ENCODE measurements at regions of chr19 and their contacts with region 1.

Region 1: DNA sequence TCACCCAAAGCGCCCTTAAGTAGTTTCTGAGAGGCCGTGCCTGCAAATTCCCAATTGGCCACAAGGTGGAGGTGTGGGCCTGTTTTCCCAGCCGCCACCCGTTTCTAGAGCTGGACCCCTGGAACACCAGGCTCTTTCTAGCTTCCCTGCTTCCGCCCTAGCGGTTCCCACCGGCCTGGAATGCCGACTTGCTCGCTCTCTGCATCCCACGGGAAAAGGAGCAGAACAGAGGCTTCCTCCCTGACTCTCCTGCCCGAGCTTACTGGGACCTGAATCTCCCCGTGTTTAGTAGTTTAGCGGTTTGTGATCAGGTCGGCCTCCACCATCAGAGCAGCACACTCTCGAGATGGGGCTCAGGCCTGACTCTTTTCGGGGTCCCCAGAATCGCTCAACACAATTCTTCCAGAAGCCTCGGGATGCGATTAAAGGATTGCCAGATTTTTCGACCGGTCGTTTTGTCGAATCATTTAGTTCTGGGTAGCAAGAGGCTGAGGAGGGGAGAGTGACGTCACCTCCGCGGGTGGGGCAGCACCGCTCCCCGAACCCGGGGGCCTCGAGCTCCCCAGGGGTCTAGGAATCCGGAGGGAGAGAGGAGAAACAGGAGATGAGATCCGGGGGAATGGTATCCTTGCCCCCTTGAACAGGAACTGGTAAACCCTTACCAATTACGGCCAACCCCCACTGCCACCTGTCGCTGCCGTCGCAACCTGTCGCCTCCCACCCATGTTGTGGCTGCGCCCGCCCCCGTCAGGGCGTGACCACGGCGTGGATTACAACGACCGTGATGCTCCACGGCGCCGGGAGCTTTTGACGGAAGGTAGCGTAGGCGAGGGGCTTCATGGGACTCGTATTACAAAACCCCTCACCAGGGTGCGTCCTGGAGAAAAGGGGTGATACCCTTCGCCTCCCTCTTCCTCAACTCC is 8.0 kb downstream of the NAPSA start:
- DNase-seq: peak; percentile 80 to 82
- H3K4me3 ChIP-seq: peak overlapping the region in 2 of 3 donors; percentile 25 to 31
- H3K27ac ChIP-seq: peak overlapping the region; percentile 65 to 83 (median 81)
- H3K4me1 ChIP-seq: peaks cover 4 to 26% of the 10 kb centered on the region in 2 donors
- H3K27me3 ChIP-seq: no peaks in the 10 kb centered on the region
- CTCF ChIP-seq: peak; percentile 77 to 91 (median 86)
- POLR2A ChIP-seq: peak in 1 of 2 donors; percentile 47

Region 2: DNA sequence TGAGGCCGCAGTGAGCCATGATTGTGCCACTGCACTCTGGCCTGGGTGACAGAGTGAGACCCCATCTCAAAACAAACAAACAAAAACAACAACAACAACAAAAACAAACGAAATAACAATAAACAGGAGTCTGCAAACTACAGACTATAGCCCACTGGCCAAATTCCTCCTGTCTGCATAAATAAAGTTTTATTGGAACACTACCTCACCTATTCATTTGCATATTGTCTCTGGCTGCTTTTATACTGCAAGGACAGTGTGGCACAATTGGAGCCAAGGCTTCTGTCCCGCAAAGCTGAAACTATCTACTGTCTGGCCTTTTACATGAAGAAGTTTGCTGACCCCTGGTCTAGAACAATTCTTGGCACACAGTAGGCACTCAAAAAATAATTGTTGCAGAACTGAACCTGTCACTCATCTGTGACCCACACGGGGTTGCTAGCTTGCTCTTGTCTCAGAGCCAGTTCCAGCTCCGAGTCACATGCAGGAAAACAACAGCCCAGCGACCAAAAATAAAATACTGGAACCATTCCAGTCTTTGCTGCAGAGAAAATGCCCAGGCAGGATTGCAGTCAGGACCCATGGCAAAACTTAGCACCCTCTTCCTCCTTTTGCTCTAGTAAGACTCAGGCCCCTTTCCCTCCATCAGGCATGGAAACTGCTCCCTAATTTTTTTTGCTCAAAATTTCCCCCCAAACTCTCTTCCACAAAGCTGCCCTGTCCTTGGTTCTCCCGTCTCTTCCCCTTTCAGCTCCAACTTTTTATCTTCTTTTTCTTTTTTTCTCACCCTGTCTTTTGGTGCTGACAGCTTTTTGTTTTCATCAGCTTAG is 158.8 kb before region 1 on chr19:
- intact Hi-C with region 1: no loop called
- DNase-seq: peak; percentile 86 to 88
- H3K4me3 ChIP-seq: no peak overlapping the region
- H3K27ac ChIP-seq: peak overlapping the region; percentile 72 to 87 (median 83)
- H3K4me1 ChIP-seq: peaks cover 17 to 31% of the 10 kb centered on the region in 2 donors
- H3K27me3 ChIP-seq: no peaks in the 10 kb centered on the region
- CTCF ChIP-seq: no peak
- POLR2A ChIP-seq: no peak

Region 3: GRCh38 chr19:50414864-50415660 is 57.6 kb after region 1 on chr19:
- intact Hi-C with region 1: loop called (anchors 5 kb)
- DNase-seq: peak; percentile 74 to 76
- H3K4me3 ChIP-seq: no peak overlapping the region
- H3K27ac ChIP-seq: no peak overlapping the region
- H3K4me1 ChIP-seq: peaks cover 0 to 6% of the 10 kb centered on the region in 2 donors
- H3K27me3 ChIP-seq: peaks cover 13% of the 10 kb centered on the region
- CTCF ChIP-seq: peak; percentile 68 to 95 (median 74)
- POLR2A ChIP-seq: no peak

Region 4: GRCh38 chr19:50461066-50461875 is 103.8 kb after region 1 on chr19:
- intact Hi-C with region 1: loop called (anchors 5 kb)
- DNase-seq: peak; percentile 55 to 74
- H3K4me3 ChIP-seq: no peak overlapping the region
- H3K27ac ChIP-seq: no peak overlapping the region
- H3K4me1 ChIP-seq: peaks cover 0 to 10% of the 10 kb centered on the region in 2 donors
- H3K27me3 ChIP-seq: no peaks in the 10 kb centered on the region
- CTCF ChIP-seq: peak; percentile 72 to 87 (median 86)
- POLR2A ChIP-seq: no peak

Region 5: DNA sequence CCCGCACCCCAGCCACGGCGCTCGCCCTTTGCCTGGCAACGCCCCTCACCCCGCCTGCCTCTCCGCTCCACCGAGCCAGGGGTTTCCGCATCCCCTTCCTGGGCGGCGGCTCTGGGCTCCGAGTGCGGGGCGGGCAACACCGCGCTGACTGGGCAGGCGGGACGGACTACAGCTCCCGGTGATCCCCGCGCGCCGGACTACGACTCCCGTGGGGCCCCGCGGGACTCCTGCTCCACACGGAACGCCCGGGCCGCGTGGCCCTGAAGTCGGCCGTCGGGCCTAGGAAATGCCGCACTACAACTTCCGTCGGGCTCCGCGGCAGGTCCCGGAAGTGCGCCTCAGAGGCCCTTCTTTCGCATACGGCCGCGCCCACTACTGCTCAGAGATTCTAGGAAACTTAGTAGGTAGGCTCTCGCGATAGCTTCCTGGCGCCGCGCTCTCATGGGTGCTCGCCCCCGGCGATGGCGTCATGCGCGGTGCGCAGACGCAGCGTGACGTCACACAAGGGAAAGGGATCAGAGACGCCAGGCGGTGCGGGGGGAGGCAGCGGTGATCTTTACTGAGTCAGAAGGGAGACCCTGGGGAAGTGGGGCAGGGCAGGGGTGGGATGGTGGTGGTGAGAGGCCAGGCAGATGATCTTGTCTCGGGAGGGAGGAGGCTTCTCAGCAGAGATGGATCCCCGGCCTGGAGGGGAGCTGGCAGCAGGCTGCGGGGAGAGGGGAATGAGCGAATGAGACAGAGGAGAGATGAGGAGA is 153.8 kb after region 1 on chr19 and contains the start of gene JOSD2:
- intact Hi-C with region 1: no loop called
- DNase-seq: peak; percentile 98
- H3K4me3 ChIP-seq: peak within 1 kb of the TSS in 2 of 3 donors; percentile 59 to 69
- H3K27ac ChIP-seq: peak within 1 kb of the TSS in 2 of 3 donors; percentile 64 to 69
- H3K4me1 ChIP-seq: peaks cover 6 to 10% of the 10 kb centered on the region in 2 donors
- H3K27me3 ChIP-seq: no peaks in the 10 kb centered on the region
- CTCF ChIP-seq: peak in 1 of 6 experiments; percentile 31
- POLR2A ChIP-seq: peak in 1 of 2 donors; percentile 60
- total RNA-seq, gene JOSD2: 23.9 to 49.5 (median 41.3) TPM

Region 6: DNA sequence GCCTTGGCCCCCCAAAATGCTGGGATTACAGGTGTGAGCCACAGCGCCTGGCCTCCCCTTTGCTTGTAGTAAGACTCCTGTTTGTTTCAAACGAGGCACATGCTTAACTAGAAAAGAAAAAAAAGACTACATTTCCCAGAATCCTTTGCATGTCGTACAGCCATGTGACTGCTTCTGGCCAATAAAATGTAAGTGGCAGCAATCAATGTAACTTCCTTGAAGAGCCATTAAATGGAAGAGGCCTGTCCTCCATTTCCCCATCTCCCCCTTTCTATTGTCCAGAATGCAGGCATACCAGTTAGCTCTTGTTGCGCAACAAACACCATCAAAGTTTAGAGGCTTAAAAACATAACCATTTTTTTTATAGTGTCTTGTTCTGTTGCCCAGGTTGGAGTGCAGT is 402.4 kb after region 1 on chr19:
- intact Hi-C with region 1: no loop called
- DNase-seq: no peak
- H3K4me3 ChIP-seq: no peak overlapping the region
- H3K27ac ChIP-seq: no peak overlapping the region
- H3K4me1 ChIP-seq: no peaks in the 10 kb centered on the region
- H3K27me3 ChIP-seq: no peaks in the 10 kb centered on the region
- CTCF ChIP-seq: no peak
- POLR2A ChIP-seq: no peak

Region 7: GRCh38 chr19:50779504-50780457 is 422.3 kb after region 1 on chr19:
- intact Hi-C with region 1: loop called (anchors 10 kb)
- DNase-seq: no peak
- H3K4me3 ChIP-seq: no peak overlapping the region
- H3K27ac ChIP-seq: no peak overlapping the region
- H3K4me1 ChIP-seq: no peaks in the 10 kb centered on the region
- H3K27me3 ChIP-seq: peaks cover 19% of the 10 kb centered on the region
- CTCF ChIP-seq: no peak
- POLR2A ChIP-seq: no peak